MCF 10A (cell line): ENCODE measurements at regions of chr12 and their contacts with region 1.

Region 1: DNA sequence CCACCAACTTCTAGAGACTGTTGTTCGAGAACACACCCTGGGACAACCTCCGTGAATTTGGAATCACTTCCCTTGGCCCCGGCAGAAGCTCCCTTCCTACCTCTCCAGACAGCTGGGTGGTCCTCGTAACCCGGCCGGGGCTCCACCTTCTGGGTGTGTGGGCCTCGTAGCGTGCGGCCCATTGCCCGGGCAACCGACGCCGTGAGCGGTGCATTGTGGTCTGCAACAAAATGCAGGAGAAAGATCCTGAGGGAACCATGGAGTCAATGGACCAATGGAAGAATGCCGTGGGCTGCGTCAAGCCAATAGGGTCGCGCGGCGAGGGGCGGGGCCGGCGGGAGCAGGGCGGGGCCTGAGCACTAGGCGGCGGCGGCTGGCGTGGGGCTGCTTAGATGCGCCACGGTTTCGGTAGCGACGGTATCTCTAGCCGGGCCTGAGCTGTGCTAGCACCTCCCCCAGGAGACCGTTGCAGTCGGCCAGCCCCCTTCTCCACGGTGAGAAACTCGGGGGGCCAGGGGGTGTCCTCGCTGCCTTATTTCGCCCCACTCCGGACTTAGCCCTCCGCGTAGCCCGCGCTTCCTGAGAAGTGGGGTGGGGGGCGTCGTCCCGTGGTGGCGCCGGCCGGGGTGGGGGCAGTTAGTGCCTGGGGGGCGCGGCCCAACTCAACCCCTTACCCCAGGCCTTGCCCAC is at the start of gene DYNLL1:
- DNase-seq: peak; percentile 97
- H3K4me3 Mint-ChIP-seq: peak within 1 kb of the TSS; percentile 88
- H3K27ac Mint-ChIP-seq: peak within 1 kb of the TSS; percentile 86
- H3K4me1 Mint-ChIP-seq: peaks cover 16% of the 10 kb centered on the region
- H3K27me3 Mint-ChIP-seq: no peaks in the 10 kb centered on the region
- CTCF ChIP-seq: no peak
- total RNA-seq, gene DYNLL1: 247 and 351 TPM in 2 replicates

Region 2: DNA sequence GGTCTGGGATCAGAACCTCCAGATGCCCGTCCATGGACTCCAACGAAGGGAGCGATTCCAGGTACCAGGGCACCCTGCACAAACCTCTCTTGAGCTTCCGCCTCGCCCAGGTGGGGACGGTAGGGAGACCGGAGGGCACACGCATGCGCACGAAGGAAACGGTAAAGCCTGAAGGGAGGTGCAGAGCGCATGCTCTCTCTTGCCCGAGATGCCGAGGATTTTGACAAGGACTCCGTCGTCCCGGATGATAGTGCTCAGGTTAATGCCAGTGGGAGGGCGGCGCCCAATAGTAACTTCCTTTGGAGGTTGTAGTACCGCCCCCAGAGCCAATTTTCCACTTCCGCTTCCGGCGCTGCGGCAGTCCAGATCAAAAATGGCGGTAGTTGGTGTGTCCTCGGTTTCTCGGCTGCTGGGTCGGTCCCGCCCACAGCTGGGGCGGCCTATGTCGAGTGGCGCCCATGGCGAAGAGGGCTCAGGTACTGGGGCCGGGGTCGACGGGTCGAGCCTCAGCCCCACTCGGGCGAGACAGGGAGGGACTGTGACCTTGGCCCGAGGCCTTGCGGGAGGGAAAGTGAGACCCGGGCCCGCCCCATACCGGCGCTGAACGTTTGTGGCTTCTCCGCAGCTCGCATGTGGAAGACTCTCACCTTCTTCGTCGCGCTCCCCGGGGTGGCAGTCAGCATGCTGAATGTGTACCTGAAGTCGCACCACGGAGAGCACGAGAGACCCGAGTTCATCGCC is 57.9 kb before region 1 on chr12 and contains the start of gene COX6A1:
- CTCF ChIA-PET with region 1: interaction called, 3 read pairs
- POLR2A ChIA-PET with region 1: interaction called, 16 read pairs
- intact Hi-C with region 1: no loop called
- DNase-seq: peak; percentile 98
- H3K4me3 Mint-ChIP-seq: peak within 1 kb of the TSS; percentile 98
- H3K27ac Mint-ChIP-seq: peak within 1 kb of the TSS; percentile 92
- H3K4me1 Mint-ChIP-seq: peaks cover 6% of the 10 kb centered on the region
- H3K27me3 Mint-ChIP-seq: no peaks in the 10 kb centered on the region
- CTCF ChIP-seq: no peak
- total RNA-seq, gene COX6A1: 475 and 518 TPM in 2 replicates

Region 3: DNA sequence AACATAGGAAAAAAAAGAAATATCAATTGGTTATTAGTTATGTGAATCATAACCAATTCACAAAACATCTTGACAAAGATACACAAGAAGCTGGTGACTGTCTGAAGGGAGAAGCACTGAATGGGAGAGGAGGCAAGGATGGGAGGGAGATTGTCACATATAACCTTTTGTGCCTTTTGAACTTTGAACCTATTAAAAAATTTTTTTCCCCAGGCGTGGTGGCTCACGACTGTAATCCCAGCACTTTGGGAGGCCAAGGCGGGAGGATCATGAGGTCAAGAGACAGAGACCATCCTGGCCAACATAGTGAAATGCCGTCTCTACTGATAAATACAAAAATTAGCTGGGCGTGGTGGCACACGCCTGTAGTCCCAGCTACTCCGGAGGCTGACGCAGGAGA is 12.7 kb after region 1 on chr12:
- CTCF ChIA-PET with region 1: interaction called, 3 read pairs
- POLR2A ChIA-PET with region 1: interaction called, 14 read pairs
- intact Hi-C with region 1: no loop called
- DNase-seq: no peak
- H3K4me3 Mint-ChIP-seq: no peak overlapping the region
- H3K27ac Mint-ChIP-seq: no peak overlapping the region
- H3K4me1 Mint-ChIP-seq: no peaks in the 10 kb centered on the region
- H3K27me3 Mint-ChIP-seq: no peaks in the 10 kb centered on the region
- CTCF ChIP-seq: no peak

Region 4: DNA sequence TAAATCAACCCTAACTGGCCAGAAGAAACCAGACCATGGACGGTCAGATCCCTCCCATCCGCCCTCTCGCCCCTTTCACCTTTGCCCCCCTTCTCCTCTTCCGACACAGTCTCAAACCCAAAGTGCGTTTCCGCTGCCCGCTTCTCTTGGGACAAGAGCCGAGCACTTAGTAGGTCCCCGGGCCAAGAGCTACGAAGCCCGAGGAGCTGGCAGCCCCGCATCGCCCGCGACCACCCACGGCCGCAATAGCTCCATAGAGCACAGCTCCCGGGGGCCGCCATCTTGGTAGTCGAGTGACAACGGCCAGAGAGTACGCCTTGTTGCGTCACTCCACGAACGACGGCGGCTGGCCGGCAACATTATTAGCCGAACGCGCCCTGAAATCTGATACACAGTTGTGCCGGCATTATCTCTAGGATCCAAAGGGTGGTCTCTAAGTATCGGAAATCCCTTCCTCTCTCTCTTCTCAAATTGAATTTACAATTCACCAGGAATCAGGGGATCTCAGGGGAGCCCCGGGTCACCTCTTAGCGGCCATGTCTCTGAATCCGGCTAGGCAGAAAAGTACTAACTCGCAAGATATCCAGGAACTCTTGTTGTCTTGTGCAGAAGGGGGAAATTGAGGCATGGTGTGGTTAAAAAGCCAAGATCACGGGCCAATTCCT is 33.1 kb after region 1 on chr12 and contains the start of gene COQ5:
- CTCF ChIA-PET with region 1: interaction called, 3 read pairs
- POLR2A ChIA-PET with region 1: interaction called, 45 read pairs
- intact Hi-C with region 1: loop called (anchors 2 kb)
- DNase-seq: peak; percentile 90
- H3K4me3 Mint-ChIP-seq: peak within 1 kb of the TSS; percentile 79
- H3K27ac Mint-ChIP-seq: peak within 1 kb of the TSS; percentile 96
- H3K4me1 Mint-ChIP-seq: peaks cover 6% of the 10 kb centered on the region
- H3K27me3 Mint-ChIP-seq: no peaks in the 10 kb centered on the region
- CTCF ChIP-seq: no peak
- total RNA-seq, gene COQ5: 21.5 and 22.9 TPM in 2 replicates

Region 5: GRCh38 chr12:120534203-120534702 is 38.4 kb after region 1 on chr12 and contains the start of gene RNF10:
- CTCF ChIA-PET with region 1: interaction called, 3 read pairs
- POLR2A ChIA-PET with region 1: interaction called, 45 read pairs
- intact Hi-C with region 1: loop called (anchors 2 kb)
- DNase-seq: peak; percentile 88
- H3K4me3 Mint-ChIP-seq: peak within 1 kb of the TSS; percentile 86
- H3K27ac Mint-ChIP-seq: peak within 1 kb of the TSS; percentile 92
- H3K4me1 Mint-ChIP-seq: peaks cover 21% of the 10 kb centered on the region
- H3K27me3 Mint-ChIP-seq: no peaks in the 10 kb centered on the region
- CTCF ChIP-seq: no peak
- total RNA-seq, gene RNF10: 166 and 222 TPM in 2 replicates

Region 6: GRCh38 chr12:120554678-120555077 is 58.8 kb after region 1 on chr12:
- CTCF ChIA-PET with region 1: no interaction called
- POLR2A ChIA-PET with region 1: no interaction called
- intact Hi-C with region 1: no loop called
- DNase-seq: no peak
- H3K4me3 Mint-ChIP-seq: no peak overlapping the region
- H3K27ac Mint-ChIP-seq: no peak overlapping the region
- H3K4me1 Mint-ChIP-seq: peaks cover 8% of the 10 kb centered on the region
- H3K27me3 Mint-ChIP-seq: no peaks in the 10 kb centered on the region
- CTCF ChIP-seq: no peak